Ascending aorta (tissue), 2 donors: ENCODE measurements at regions of chr16 and their contacts with region 1.

Region 1: DNA sequence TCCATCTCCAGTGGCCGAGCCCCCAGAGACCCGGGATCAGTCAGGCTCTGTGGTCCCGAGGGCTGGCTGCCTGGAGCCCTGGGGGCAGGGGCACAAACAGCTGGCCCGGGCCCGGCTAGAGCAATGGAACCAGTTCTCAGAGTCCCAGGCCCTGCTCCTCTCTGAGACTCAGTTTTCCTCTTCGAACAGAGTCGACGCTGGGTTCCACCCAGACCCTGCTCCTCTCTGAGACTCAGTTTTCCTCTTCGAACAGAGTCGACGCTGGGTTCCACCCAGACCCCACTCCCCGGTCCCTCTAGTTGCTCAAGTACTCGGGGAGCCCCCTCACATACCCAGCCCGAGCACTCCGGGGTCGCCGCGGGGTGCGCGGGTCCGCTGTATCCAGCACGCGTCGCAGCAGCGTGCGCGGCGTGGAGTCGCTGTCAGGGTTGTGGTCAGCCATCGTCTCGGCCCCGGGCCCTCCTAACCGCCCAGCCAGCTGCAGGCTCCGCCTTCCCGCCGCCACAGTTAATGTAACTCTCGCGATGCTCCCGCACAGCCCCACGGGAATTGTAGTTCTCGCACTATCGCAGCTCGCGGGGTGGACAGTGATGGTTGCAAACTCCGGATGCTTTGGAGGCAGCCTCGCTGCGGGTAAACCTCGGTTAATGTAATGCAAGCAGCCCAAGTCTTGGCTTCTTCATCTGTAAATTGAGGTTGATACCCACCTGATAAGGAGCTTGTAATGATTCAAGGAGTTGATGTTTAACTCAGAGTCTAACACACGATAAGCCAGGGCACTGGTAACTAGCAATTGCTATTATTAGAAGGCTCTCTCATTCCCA is 8.5 kb upstream of the THAP11 start:
- DNase-seq: peak; percentile 76 to 97
- H3K4me3 ChIP-seq: peak overlapping the region; percentile 79 to 80
- H3K27ac ChIP-seq: peak overlapping the region; percentile 69
- H3K4me1 ChIP-seq: peaks cover 0 to 8% of the 10 kb centered on the region in 2 donors
- H3K27me3 ChIP-seq: no peaks in the 10 kb centered on the region
- CTCF ChIP-seq: no peak

Region 2: GRCh38 chr16:67773099-67773498 is 60.5 kb before region 1 on chr16:
- intact Hi-C with region 1: no loop called
- DNase-seq: no peak
- H3K4me3 ChIP-seq: no peak overlapping the region
- H3K27ac ChIP-seq: peak overlapping the region; percentile 42 to 46
- H3K4me1 ChIP-seq: peaks cover 3 to 12% of the 10 kb centered on the region in 2 donors
- H3K27me3 ChIP-seq: no peaks in the 10 kb centered on the region
- CTCF ChIP-seq: no peak

Region 3: DNA sequence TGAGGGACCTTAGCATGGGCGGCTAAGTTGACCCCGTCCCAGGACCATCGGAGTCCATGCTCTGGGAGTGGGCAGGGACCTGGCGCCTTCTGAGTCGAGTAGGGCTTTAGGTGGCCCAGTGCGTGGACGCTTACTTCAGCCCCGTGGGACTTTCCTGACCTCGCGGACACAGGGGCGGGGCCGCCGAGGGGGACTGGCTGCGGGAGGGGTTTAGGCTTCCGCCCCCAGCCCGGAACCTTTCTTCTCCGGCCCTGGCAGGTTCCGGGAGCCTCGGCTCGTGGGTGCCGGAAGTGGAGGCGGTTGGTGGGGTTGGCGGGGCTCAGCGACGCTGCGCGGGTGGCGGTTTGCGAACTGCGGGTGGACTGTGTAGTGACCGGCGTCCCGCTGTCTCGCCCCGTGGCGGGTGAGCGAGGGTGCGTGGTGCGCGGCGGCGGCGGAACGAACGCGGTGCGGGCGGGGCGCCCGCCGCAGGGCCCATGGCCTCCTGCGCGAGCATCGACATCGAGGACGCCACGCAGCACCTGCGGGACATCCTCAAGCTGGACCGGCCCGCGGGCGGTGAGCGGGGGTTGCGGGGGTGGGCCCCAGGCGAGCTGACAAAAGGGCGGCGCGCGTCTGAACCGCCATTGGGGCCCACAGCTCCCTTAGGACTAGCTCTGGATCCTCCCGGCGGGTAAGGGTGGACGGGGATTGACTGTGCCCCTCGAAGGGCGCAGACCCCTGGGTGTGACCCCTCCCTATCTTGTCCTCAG is 39.3 kb after region 1 on chr16 and contains the start of gene EDC4:
- intact Hi-C with region 1: loop called (anchors 5 kb)
- DNase-seq: peak; percentile 41 to 93
- H3K4me3 ChIP-seq: peak within 1 kb of the TSS; percentile 87 to 91
- H3K27ac ChIP-seq: peak within 1 kb of the TSS; percentile 83 to 86
- H3K4me1 ChIP-seq: peaks cover 0 to 15% of the 10 kb centered on the region in 2 donors
- H3K27me3 ChIP-seq: no peaks in the 10 kb centered on the region
- CTCF ChIP-seq: no peak
- total RNA-seq, gene EDC4: 125 TPM